ENCODE measurements at regions of chr22 and their contacts with region 1.

Region 1: GRCh38 chr22:22207845-22208564 is 36.6 kb upstream of the VPREB1 start:
- DNase-seq: peak; percentile 95
- H3K4me3 Mint-ChIP-seq: peak overlapping the region; percentile 29
- H3K27ac Mint-ChIP-seq: peak overlapping the region; percentile 75
- H3K4me1 Mint-ChIP-seq: peaks cover 32% of the 10 kb centered on the region
- H3K27me3 Mint-ChIP-seq: peaks cover 7% of the 10 kb centered on the region

Region 2: GRCh38 chr22:22168190-22168940 is 39.6 kb before region 1 on chr22:
- intact Hi-C with region 1: no loop called
- DNase-seq: no peak
- H3K4me3 Mint-ChIP-seq: peak overlapping the region; percentile 49
- H3K27ac Mint-ChIP-seq: peak overlapping the region; percentile 58
- H3K4me1 Mint-ChIP-seq: peaks cover 2% of the 10 kb centered on the region
- H3K27me3 Mint-ChIP-seq: peaks cover 7% of the 10 kb centered on the region

Region 3: DNA sequence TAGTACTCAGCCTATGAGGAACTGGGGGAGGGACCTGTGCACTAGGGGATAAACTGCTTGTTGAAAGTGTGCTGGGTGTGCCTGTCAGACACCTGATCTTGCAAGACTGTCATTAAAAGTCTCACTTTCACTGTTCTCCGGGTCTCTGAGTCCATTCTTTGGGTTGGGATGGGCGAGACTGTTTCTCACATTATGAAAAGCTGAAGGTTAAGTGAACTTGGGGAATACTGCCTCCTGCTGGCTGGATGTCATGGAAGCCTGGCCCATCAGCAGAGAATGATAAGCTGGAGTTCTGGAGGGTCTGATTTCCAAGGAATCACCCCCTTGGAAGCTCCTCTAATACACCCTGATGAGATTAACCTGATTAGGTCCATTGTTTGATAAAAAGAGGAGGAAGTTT is 27.6 kb after region 1 on chr22:
- intact Hi-C with region 1: loop called (anchors 1 kb)
- DNase-seq: peak; percentile 87
- H3K4me3 Mint-ChIP-seq: no peak overlapping the region
- H3K27ac Mint-ChIP-seq: no peak overlapping the region
- H3K4me1 Mint-ChIP-seq: peaks cover 11% of the 10 kb centered on the region
- H3K27me3 Mint-ChIP-seq: no peaks in the 10 kb centered on the region